Activated B cell treated with CpG ODN at 0.5 μM for 24 hours (primary cell): ENCODE measurements at regions of chr3 and their contacts with region 1.

Region 1: DNA sequence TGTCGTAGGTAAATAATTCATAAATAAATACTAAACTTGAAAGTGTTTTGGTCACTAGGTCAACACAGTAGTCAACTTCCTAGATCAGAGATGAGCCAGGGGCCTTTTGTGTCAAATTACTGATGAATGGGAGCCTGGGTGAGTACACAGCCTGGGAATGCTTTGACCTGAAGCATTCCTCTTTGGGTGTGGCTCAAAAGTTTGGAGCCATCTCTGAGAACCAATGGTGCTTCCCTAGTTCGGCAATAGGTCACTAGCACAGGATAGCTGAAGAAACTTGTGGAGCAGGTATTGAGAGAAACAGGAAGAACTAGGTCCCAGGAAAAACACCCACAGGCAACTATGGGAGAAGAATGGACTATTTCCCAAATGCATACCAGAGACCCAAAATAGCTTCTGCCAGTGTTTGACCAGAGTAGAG is 56.6 kb upstream of the PLXND1 start:
- DNase-seq: no peak
- ATAC-seq: no peak
- H3K4me3 Mint-ChIP-seq: no peak overlapping the region
- H3K27ac Mint-ChIP-seq: no peak overlapping the region
- H3K4me1 Mint-ChIP-seq: peaks cover 9% of the 10 kb centered on the region
- H3K27me3 Mint-ChIP-seq: no peaks in the 10 kb centered on the region
- CTCF ChIP-seq: no peak

Region 2: GRCh38 chr3:129491794-129492193 is 171.2 kb before region 1 on chr3:
- CTCF ChIA-PET with region 1: no interaction called
- POLR2A ChIA-PET with region 1: no interaction called
- intact Hi-C with region 1: no loop called
- DNase-seq: no peak
- ATAC-seq: no peak
- H3K4me3 Mint-ChIP-seq: no peak overlapping the region
- H3K27ac Mint-ChIP-seq: no peak overlapping the region
- H3K4me1 Mint-ChIP-seq: no peaks in the 10 kb centered on the region
- H3K27me3 Mint-ChIP-seq: no peaks in the 10 kb centered on the region
- CTCF ChIP-seq: no peak

Region 3: DNA sequence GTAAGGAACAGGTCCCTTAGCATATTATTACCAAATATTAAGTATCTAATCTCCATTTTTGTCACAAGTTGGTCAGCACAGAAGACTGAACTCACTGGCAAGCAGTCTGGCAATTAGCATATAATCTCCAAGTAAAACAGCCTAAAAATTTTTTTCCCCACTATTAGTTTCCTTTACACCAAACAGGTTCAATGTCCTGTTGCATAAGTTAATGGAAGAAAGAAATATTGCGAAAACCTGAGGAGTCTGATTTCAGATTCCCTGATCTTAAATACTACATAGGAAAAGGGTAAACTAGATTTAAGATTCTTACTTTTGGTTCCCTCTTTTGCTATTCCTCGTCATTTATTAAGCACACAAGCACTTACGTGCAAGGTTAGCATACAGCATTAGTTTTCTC is 76.6 kb after region 1 on chr3:
- CTCF ChIA-PET with region 1: no interaction called
- POLR2A ChIA-PET with region 1: no interaction called
- intact Hi-C with region 1: loop called (anchors 5 kb)
- DNase-seq: no peak
- ATAC-seq: no peak
- H3K4me3 Mint-ChIP-seq: no peak overlapping the region
- H3K27ac Mint-ChIP-seq: no peak overlapping the region
- H3K4me1 Mint-ChIP-seq: peaks cover 28% of the 10 kb centered on the region
- H3K27me3 Mint-ChIP-seq: no peaks in the 10 kb centered on the region
- CTCF ChIP-seq: no peak